ENCODE measurements at regions of chr11 and their contacts with region 1.

Region 1: GRCh38 chr11:65888163-65888814 is at the start of gene FIBP:
- DNase-seq: peak; percentile 99
- H3K4me3 Mint-ChIP-seq: peak within 1 kb of the TSS; percentile 97
- H3K27ac Mint-ChIP-seq: peak within 1 kb of the TSS; percentile 95
- H3K4me1 Mint-ChIP-seq: peaks cover 62% of the 10 kb centered on the region
- H3K27me3 Mint-ChIP-seq: no peaks in the 10 kb centered on the region
- total RNA-seq, gene FIBP: 83.1 to 86.6 TPM

Region 2: DNA sequence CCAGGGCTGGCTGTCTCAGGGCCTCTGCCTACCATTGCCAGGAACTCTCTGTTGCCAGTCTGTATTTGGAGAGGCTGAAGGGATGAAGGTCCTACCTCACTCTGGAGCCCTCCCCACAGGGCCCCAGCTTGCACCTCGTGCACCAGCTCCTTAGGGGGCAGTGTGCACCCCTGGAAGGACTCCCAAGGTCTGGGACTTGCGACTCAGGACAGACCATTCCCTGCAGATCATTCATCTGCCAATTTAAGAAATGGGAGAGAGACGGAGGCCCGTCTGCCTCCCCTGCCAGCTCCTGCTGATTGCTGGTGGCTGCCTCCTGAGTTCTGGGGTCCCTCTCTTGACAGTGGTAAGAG is 416.9 kb before region 1 on chr11:
- CTCF ChIA-PET with region 1: no interaction called
- intact Hi-C with region 1: no loop called
- DNase-seq: peak; percentile 64
- H3K4me3 Mint-ChIP-seq: peak overlapping the region; percentile 69
- H3K27ac Mint-ChIP-seq: peak overlapping the region; percentile 95
- H3K4me1 Mint-ChIP-seq: peaks cover 44% of the 10 kb centered on the region
- H3K27me3 Mint-ChIP-seq: no peaks in the 10 kb centered on the region

Region 3: GRCh38 chr11:65551572-65552398 is 336.5 kb before region 1 on chr11:
- CTCF ChIA-PET with region 1: no interaction called
- intact Hi-C with region 1: no loop called
- DNase-seq: peak; percentile 76
- H3K4me3 Mint-ChIP-seq: no peak overlapping the region
- H3K27ac Mint-ChIP-seq: peak overlapping the region; percentile 61
- H3K4me1 Mint-ChIP-seq: peaks cover 63% of the 10 kb centered on the region
- H3K27me3 Mint-ChIP-seq: no peaks in the 10 kb centered on the region

Region 4: GRCh38 chr11:65711785-65712632 is 176.3 kb before region 1 on chr11 and contains the start of gene KAT5:
- CTCF ChIA-PET with region 1: interaction called, 5 read pairs
- intact Hi-C with region 1: loop called (anchors 2 kb)
- DNase-seq: peak; percentile 100
- H3K4me3 Mint-ChIP-seq: peak within 1 kb of the TSS; percentile 95
- H3K27ac Mint-ChIP-seq: peak within 1 kb of the TSS; percentile 97
- H3K4me1 Mint-ChIP-seq: peaks cover 33% of the 10 kb centered on the region
- H3K27me3 Mint-ChIP-seq: no peaks in the 10 kb centered on the region
- total RNA-seq, gene KAT5: 60.1 to 67.1 TPM

Region 5: DNA sequence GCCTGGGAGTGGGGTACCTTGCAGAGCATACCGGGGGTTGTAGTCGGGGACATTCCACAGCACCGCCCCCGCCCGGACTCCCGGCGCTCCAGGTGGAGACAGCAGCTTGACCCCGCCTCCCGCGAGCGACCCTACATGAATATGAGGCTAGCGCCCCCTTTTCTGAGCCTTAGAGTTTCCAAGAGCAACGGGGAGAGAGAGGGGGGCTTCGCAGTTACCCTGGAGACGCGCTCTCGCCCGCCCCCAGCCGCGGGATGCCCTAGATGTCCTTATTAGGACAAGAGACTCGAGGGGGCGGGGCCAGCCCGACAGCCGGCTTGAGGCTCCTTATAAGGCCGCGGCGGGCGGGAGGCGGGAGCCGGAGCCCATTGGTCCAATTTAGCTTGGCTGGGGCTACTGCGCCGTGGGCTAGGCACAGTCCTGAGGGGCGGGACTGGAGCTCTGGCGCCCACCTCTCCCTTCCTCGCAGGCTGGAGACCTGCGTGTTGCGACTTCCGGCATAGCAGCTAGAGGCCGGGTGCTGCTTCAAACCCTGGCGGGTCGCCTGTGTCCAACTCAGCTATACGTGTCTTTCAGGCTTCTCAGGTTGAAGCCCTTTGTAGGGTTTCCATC is 29.0 kb before region 1 on chr11:
- CTCF ChIA-PET with region 1: interaction called, 178 read pairs
- intact Hi-C with region 1: loop called (anchors 1 kb)
- DNase-seq: peak; percentile 99
- H3K4me3 Mint-ChIP-seq: peak overlapping the region; percentile 97
- H3K27ac Mint-ChIP-seq: peak overlapping the region; percentile 100
- H3K4me1 Mint-ChIP-seq: peaks cover 41% of the 10 kb centered on the region
- H3K27me3 Mint-ChIP-seq: no peaks in the 10 kb centered on the region

Region 6: GRCh38 chr11:65906602-65907001 is 18.3 kb after region 1 on chr11:
- CTCF ChIA-PET with region 1: interaction called, 22 read pairs
- intact Hi-C with region 1: loop called (anchors 2 kb)
- DNase-seq: no peak
- H3K4me3 Mint-ChIP-seq: no peak overlapping the region
- H3K27ac Mint-ChIP-seq: no peak overlapping the region
- H3K4me1 Mint-ChIP-seq: peaks cover 5% of the 10 kb centered on the region
- H3K27me3 Mint-ChIP-seq: peaks cover 5% of the 10 kb centered on the region

Region 7: DNA sequence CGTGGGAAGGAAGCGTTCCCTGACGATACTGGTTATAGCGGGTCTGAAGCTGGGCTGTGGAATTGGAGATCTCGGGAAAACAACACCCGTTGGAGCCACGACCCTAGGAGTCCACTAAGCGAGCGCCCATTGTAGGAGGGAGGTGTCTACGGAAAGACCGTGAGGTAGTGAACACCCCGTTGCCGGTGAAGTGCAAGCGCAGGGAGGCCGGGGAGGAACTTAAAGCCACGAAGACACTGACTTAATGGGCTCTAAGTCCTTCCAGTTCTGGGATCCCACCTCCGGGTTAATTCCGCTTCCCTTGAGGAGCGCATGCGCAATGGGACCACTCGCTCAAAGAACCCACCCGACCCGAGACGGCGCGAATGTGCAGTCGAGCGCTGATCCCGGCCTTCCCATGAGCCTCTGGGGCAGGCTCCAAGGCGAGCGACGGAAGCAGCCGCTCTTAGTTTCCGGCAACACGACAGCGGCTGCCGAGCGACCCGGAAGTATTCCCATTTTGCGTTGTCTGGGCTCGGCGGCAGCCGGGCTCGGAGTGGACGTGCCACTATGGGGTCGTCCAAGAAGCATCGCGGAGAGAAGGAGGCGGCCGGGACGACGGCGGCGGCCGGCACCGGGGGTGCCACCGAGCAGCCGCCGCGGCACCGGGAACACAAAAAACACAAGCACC is 73.1 kb after region 1 on chr11 and contains the start of gene SART1:
- CTCF ChIA-PET with region 1: interaction called, 12 read pairs
- intact Hi-C with region 1: loop called (anchors 1 kb)
- DNase-seq: peak; percentile 98
- H3K4me3 Mint-ChIP-seq: peak within 1 kb of the TSS; percentile 95
- H3K27ac Mint-ChIP-seq: peak within 1 kb of the TSS; percentile 95
- H3K4me1 Mint-ChIP-seq: peaks cover 48% of the 10 kb centered on the region
- H3K27me3 Mint-ChIP-seq: no peaks in the 10 kb centered on the region
- total RNA-seq, gene SART1: 50.1 to 59.9 TPM

Region 8: GRCh38 chr11:66051766-66052663 is 163.7 kb after region 1 on chr11 and contains the start of gene SF3B2:
- CTCF ChIA-PET with region 1: no interaction called
- intact Hi-C with region 1: loop called (anchors 5 kb)
- DNase-seq: peak; percentile 98
- H3K4me3 Mint-ChIP-seq: peak within 1 kb of the TSS; percentile 99
- H3K27ac Mint-ChIP-seq: peak within 1 kb of the TSS; percentile 96
- H3K4me1 Mint-ChIP-seq: peaks cover 41% of the 10 kb centered on the region
- H3K27me3 Mint-ChIP-seq: peaks cover 7% of the 10 kb centered on the region
- total RNA-seq, gene SF3B2: 319 to 321 TPM

Region 9: GRCh38 chr11:66277471-66278362 is 389.4 kb after region 1 on chr11 and contains the start of gene CNIH2:
- CTCF ChIA-PET with region 1: no interaction called
- intact Hi-C with region 1: no loop called
- DNase-seq: no peak
- H3K4me3 Mint-ChIP-seq: peak within 1 kb of the TSS; percentile 62
- H3K27ac Mint-ChIP-seq: no peak within 1 kb of the TSS
- H3K4me1 Mint-ChIP-seq: peaks cover 17% of the 10 kb centered on the region
- H3K27me3 Mint-ChIP-seq: no peaks in the 10 kb centered on the region
- total RNA-seq, gene CNIH2: 1.2 to 1.6 TPM

Measured in activated naive CD4-positive, alpha-beta T cell treated with anti-CD3 and anti-CD28 coated beads for 36 hours (primary cell).